ENCODE measurements at regions of chr6 and their contacts with region 1.

Region 1: GRCh38 chr6:90285611-90286381 is 10.8 kb downstream of the BACH2 start:
- DNase-seq: peak; percentile 68
- H3K4me3 Mint-ChIP-seq: peak overlapping the region; percentile 70
- H3K27ac Mint-ChIP-seq: peak overlapping the region; percentile 94
- H3K4me1 Mint-ChIP-seq: peaks cover 94% of the 10 kb centered on the region
- H3K27me3 Mint-ChIP-seq: no peaks in the 10 kb centered on the region

Region 2: GRCh38 chr6:89080542-89081422 is 1205.0 kb before region 1 on chr6 and contains the start of gene PNRC1:
- CTCF ChIA-PET with region 1: no interaction called
- intact Hi-C with region 1: loop called (anchors 10 kb)
- DNase-seq: peak; percentile 100
- H3K4me3 Mint-ChIP-seq: peak within 1 kb of the TSS; percentile 93
- H3K27ac Mint-ChIP-seq: peak within 1 kb of the TSS; percentile 99
- H3K4me1 Mint-ChIP-seq: peaks cover 30% of the 10 kb centered on the region
- H3K27me3 Mint-ChIP-seq: no peaks in the 10 kb centered on the region
- total RNA-seq, gene PNRC1: 110 to 111 TPM

Region 3: DNA sequence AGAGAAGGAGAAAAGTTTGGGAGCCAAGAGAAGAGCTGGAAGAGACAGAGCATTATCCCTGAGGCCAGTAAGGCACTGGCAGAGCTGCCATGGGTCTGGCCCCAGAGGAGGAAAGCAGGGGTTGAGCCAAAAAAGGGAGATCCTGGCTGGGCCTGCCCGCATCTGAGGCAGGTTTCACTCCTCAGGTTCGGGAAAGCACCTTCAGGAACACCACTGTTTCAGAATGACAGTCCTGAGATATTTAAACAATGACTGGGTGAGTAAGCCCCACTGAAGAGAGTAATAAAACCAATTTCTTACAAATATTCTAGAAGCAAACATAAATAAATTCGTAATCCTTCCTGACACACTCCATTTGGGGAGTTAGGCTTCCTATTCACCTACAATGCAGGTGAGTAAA is 141.4 kb before region 1 on chr6:
- CTCF ChIA-PET with region 1: no interaction called
- intact Hi-C with region 1: loop called (anchors 2 kb)
- DNase-seq: peak; percentile 84
- H3K4me3 Mint-ChIP-seq: peak overlapping the region; percentile 49
- H3K27ac Mint-ChIP-seq: peak overlapping the region; percentile 91
- H3K4me1 Mint-ChIP-seq: peaks cover 88% of the 10 kb centered on the region
- H3K27me3 Mint-ChIP-seq: no peaks in the 10 kb centered on the region

Region 4: DNA sequence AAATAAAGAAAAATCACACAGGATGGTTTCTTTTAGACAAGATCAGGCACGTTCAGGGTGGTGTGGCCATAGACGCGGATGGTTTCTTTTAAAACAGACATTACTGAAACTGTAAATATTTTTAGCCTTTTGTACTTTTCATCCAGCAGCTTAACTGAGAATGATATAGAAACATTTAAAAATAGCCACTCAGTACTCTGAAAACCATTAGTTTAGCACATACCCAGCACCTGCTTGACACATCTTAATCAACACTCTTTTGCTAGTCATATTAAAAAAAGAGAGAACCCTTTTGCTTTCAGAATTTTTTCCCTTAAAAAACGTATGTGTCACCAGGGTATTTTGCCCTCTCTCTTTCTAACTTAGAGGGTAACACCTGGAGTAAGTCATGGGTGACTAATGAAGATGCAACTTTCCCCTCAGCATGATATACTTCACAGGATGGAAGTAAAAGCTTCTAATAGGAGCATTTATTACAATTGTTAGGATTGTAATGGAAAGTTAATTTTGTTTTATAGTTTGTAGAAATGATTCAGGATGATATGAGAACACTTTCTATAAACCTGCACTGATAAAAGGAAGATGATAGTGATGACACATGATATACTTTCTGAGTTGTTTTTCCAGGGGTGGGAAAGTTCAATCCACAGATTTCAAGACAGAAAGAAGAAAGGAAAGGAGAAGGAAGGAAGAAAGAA is 34.4 kb before region 1 on chr6:
- CTCF ChIA-PET with region 1: interaction called, 3 read pairs
- intact Hi-C with region 1: loop called (anchors 1 kb)
- DNase-seq: no peak
- H3K4me3 Mint-ChIP-seq: peak overlapping the region; percentile 8
- H3K27ac Mint-ChIP-seq: peak overlapping the region; percentile 98
- H3K4me1 Mint-ChIP-seq: peaks cover 90% of the 10 kb centered on the region
- H3K27me3 Mint-ChIP-seq: no peaks in the 10 kb centered on the region

Region 5: GRCh38 chr6:90383196-90383822 is 97.5 kb after region 1 on chr6:
- CTCF ChIA-PET with region 1: interaction called, 11 read pairs
- intact Hi-C with region 1: no loop called
- DNase-seq: peak; percentile 65
- H3K4me3 Mint-ChIP-seq: no peak overlapping the region
- H3K27ac Mint-ChIP-seq: no peak overlapping the region
- H3K4me1 Mint-ChIP-seq: peaks cover 44% of the 10 kb centered on the region
- H3K27me3 Mint-ChIP-seq: no peaks in the 10 kb centered on the region

Region 6: GRCh38 chr6:90458353-90459224 is 172.8 kb after region 1 on chr6:
- CTCF ChIA-PET with region 1: interaction called, 8 read pairs
- intact Hi-C with region 1: loop called (anchors 1 kb)
- DNase-seq: peak; percentile 95
- H3K4me3 Mint-ChIP-seq: peak overlapping the region; percentile 66
- H3K27ac Mint-ChIP-seq: peak overlapping the region; percentile 99
- H3K4me1 Mint-ChIP-seq: peaks cover 89% of the 10 kb centered on the region
- H3K27me3 Mint-ChIP-seq: no peaks in the 10 kb centered on the region

Region 7: GRCh38 chr6:90574610-90575009 is 288.8 kb after region 1 on chr6:
- CTCF ChIA-PET with region 1: no interaction called
- intact Hi-C with region 1: loop called (anchors 5 kb)
- DNase-seq: no peak
- H3K4me3 Mint-ChIP-seq: no peak overlapping the region
- H3K27ac Mint-ChIP-seq: no peak overlapping the region
- H3K4me1 Mint-ChIP-seq: peaks cover 10% of the 10 kb centered on the region
- H3K27me3 Mint-ChIP-seq: no peaks in the 10 kb centered on the region

Measured in activated naive CD4-positive, alpha-beta T cell treated with anti-CD3 and anti-CD28 coated beads for 36 hours (primary cell).